Esophagus muscularis mucosa (tissue), 4 donors: ENCODE measurements at regions of chr6 and their contacts with region 1.

Region 1: DNA sequence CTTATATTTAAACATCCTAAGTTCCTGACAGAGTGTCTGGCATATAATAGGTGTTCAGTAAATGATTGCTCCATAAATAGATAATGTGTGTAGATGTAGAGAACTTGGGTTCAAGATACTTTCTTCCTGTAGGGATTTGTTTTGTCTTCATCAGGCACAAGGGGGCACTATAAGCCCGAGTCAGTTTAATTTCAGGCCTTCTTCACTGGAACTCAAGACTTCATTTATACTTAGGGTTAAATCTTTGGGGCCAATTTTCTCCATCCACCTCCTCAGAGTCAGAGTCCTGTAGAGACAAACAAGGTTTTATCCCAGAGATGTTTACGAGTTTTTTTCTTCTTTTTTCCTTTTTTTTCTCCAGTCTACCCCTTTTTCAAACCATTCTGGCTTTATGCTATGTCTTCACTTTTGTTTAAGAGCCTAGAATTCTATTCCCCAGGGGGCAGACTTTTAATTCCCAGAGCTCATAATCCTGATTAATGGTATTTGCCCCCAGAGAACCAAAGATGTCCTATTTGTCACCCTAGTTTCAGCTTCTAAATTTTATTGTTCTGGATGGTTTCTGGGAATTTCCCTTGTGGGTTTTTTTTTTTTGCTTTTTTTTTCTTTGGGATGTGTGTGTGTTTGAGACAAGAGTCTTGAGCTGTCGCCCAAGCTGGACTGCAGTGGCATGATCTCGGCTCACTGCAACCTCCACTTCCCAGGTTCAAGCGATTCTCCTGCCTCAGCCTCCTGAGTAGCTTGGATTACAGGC is 88.4 kb downstream of the HFE start:
- DNase-seq: no peak
- H3K4me3 ChIP-seq: no peak overlapping the region
- H3K27ac ChIP-seq: peak overlapping the region in 3 of 4 donors; percentile 30 to 43 (median 32)
- H3K4me1 ChIP-seq: peaks cover 14 to 20% (median 16%) of the 10 kb centered on the region in 4 donors
- H3K27me3 ChIP-seq: no peaks in the 10 kb centered on the region
- CTCF ChIP-seq: peak; percentile 55 to 72 (median 64)
- EP300 ChIP-seq: no peak
- POLR2A ChIP-seq: no peak

Region 2: GRCh38 chr6:26124781-26125685 is 50.6 kb before region 1 on chr6:
- intact Hi-C with region 1: loop called (anchors 5 kb)
- DNase-seq: no peak
- H3K4me3 ChIP-seq: peak overlapping the region; percentile 80 to 94 (median 87)
- H3K27ac ChIP-seq: peak overlapping the region; percentile 95 to 98 (median 96)
- H3K4me1 ChIP-seq: peaks cover 36 to 45% (median 39%) of the 10 kb centered on the region in 4 donors
- H3K27me3 ChIP-seq: no peaks in the 10 kb centered on the region
- CTCF ChIP-seq: no peak
- EP300 ChIP-seq: no peak
- POLR2A ChIP-seq: peak; percentile 7

Region 3: DNA sequence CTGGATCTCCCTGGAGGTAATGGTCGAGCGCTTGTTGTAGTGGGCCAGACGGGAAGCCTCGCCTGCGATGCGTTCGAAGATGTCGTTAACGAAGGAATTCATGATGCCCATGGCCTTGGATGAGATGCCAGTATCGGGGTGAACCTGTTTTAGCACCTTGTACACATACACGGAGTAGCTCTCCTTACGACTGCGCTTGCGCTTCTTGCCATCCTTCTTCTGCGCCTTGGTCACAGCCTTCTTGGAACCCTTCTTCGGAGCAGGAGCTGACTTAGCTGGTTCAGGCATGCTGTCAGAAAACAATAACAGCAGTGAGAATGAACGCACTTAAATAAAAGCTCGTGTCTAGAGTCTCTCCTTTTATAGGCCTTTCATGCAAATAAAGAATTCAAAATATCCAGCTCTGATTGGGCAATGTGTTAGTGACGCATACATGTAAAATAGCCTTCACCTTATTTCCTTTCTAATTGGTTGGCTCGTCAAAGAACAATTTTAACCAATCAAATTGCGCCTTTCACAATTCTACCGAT is 40.8 kb after region 1 on chr6:
- intact Hi-C with region 1: loop called (anchors 5 kb)
- DNase-seq: peak; percentile 95
- H3K4me3 ChIP-seq: peak overlapping the region; percentile 55 to 62 (median 57)
- H3K27ac ChIP-seq: peak overlapping the region; percentile 89 to 96 (median 90)
- H3K4me1 ChIP-seq: peaks cover 17 to 33% (median 30%) of the 10 kb centered on the region in 4 donors
- H3K27me3 ChIP-seq: peaks cover 0 to 28% (median 0%) of the 10 kb centered on the region in 4 donors
- CTCF ChIP-seq: no peak
- EP300 ChIP-seq: no peak
- POLR2A ChIP-seq: peak; percentile 81

Region 4: GRCh38 chr6:26240154-26241032 is 64.8 kb after region 1 on chr6:
- intact Hi-C with region 1: no loop called
- DNase-seq: no peak
- H3K4me3 ChIP-seq: peak overlapping the region; percentile 53 to 64 (median 56)
- H3K27ac ChIP-seq: peak overlapping the region; percentile 66 to 84 (median 74)
- H3K4me1 ChIP-seq: peaks cover 0 to 15% (median 10%) of the 10 kb centered on the region in 4 donors
- H3K27me3 ChIP-seq: peaks cover 0 to 81% (median 20%) of the 10 kb centered on the region in 4 donors
- CTCF ChIP-seq: no peak
- EP300 ChIP-seq: no peak
- POLR2A ChIP-seq: no peak